ENCODE measurements at regions of chr3 and their contacts with region 1.

Region 1: GRCh38 chr3:31531992-31532586 is 636 bp upstream of the STT3B start:
- DNase-seq: peak; percentile 99
- H3K4me3 Mint-ChIP-seq: no peak overlapping the region
- H3K27ac Mint-ChIP-seq: peak overlapping the region; percentile 98
- H3K4me1 Mint-ChIP-seq: peaks cover 11% of the 10 kb centered on the region
- H3K27me3 Mint-ChIP-seq: no peaks in the 10 kb centered on the region
- CTCF ChIP-seq: no peak

Region 2: DNA sequence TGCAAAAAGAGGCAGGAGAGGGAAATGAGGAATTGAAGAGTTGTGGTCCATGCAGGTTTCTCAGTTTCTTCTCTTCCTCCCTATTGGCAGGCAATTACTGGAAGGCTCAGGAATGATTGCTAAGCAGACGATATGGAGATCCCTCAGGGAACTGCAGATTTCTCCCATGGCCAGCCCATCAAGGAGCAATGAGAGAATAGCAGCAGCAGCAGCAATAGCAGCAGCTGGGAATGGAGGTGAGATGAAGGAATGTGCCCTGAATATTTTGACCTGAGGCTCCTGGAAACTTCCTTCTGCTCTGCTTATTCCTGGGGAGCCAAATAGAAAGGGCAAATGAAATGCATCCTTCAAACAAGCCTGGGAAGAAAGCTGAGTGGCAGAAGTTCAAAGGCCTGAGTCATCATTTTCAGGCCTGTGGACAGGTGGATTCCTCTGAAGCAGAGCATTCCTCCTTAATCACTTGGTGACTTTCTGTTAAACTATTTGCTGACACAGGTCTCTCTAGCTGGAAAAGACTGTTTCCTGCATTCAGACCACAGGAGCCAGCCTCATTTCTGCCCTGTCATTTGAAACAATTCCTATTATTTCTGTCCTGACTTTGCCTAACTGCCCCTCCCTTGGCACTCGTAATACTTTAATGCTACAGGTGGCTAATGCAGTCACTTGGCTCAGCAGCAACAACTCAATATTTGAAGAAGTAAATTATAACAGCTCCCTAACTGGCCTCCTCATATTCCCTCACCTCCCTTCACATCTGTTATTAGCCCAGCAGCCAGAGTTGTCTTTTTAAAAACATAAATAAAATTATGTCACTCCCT is 490.7 kb before region 1 on chr3:
- CTCF ChIA-PET with region 1: no interaction called
- POLR2A ChIA-PET with region 1: interaction called, 13 read pairs
- intact Hi-C with region 1: no loop called
- DNase-seq: peak; percentile 91
- H3K4me3 Mint-ChIP-seq: no peak overlapping the region
- H3K27ac Mint-ChIP-seq: peak overlapping the region; percentile 81
- H3K4me1 Mint-ChIP-seq: peaks cover 47% of the 10 kb centered on the region
- H3K27me3 Mint-ChIP-seq: no peaks in the 10 kb centered on the region
- CTCF ChIP-seq: no peak

Region 3: GRCh38 chr3:31166249-31166885 is 365.7 kb before region 1 on chr3:
- CTCF ChIA-PET with region 1: no interaction called
- POLR2A ChIA-PET with region 1: interaction called, 6 read pairs
- intact Hi-C with region 1: loop called (anchors 5 kb)
- DNase-seq: peak; percentile 73
- H3K4me3 Mint-ChIP-seq: no peak overlapping the region
- H3K27ac Mint-ChIP-seq: peak overlapping the region; percentile 66
- H3K4me1 Mint-ChIP-seq: peaks cover 41% of the 10 kb centered on the region
- H3K27me3 Mint-ChIP-seq: no peaks in the 10 kb centered on the region
- CTCF ChIP-seq: no peak

Region 4: DNA sequence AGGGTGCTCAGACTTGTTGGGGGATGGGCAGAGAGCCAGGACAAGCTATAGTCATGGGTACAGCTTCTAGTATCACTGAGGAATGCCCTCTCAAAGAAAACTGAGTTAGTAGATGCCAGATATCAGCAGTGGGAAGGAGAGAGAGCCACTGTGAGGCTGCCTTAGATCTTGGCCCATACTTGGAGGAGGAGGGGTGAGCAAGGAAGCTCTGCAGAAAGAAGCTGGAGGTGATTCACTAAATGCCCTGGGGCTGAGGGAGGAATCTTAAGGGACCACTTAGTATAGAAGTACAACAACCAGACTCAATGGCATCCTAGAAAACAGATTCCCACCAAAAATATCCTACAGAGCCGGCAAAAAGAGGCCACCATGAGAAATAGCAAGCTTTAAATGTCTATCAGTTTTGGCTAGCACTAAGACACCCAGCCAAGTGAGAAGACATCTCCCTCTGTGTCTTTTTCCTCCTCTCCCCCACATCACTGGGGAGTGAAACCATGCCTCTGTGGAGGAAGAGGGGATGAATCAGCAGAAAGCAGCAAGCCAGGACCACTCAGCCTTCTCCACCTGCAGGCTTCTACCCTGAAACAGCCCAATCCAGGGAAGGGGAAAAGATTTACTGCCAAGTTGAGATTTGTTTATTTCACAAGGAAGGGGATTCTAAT is 281.8 kb before region 1 on chr3:
- CTCF ChIA-PET with region 1: no interaction called
- POLR2A ChIA-PET with region 1: interaction called, 3 read pairs
- intact Hi-C with region 1: loop called (anchors 10 kb)
- DNase-seq: peak; percentile 29
- H3K4me3 Mint-ChIP-seq: no peak overlapping the region
- H3K27ac Mint-ChIP-seq: no peak overlapping the region
- H3K4me1 Mint-ChIP-seq: peaks cover 11% of the 10 kb centered on the region
- H3K27me3 Mint-ChIP-seq: no peaks in the 10 kb centered on the region
- CTCF ChIP-seq: no peak

Region 5: DNA sequence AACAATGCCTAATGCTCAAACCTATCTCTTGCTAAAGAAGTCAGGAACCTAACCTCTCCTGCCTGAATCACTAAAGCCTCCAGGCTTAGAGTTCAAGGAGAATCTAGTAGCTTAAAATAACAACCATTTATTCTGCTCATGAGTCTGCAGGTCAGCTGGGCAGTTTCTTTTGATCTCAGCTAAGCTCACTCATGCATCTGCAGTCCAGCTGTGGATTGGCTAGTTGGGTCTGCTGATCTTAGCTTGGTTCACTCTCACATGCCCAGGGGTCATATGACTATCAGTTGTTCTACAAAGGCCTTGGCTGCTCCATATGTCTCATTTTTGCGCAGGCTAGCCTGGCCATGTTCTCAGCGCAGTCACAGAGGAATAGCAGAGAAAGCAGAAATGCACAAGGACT is 108.6 kb before region 1 on chr3:
- CTCF ChIA-PET with region 1: no interaction called
- POLR2A ChIA-PET with region 1: interaction called, 10 read pairs
- intact Hi-C with region 1: no loop called
- DNase-seq: peak; percentile 1
- H3K4me3 Mint-ChIP-seq: no peak overlapping the region
- H3K27ac Mint-ChIP-seq: no peak overlapping the region
- H3K4me1 Mint-ChIP-seq: no peaks in the 10 kb centered on the region
- H3K27me3 Mint-ChIP-seq: no peaks in the 10 kb centered on the region
- CTCF ChIP-seq: no peak

Region 6: GRCh38 chr3:31550452-31551251 is 18.6 kb after region 1 on chr3:
- CTCF ChIA-PET with region 1: interaction called, 7 read pairs
- POLR2A ChIA-PET with region 1: interaction called, 107 read pairs
- intact Hi-C with region 1: no loop called
- DNase-seq: peak; percentile 52
- H3K4me3 Mint-ChIP-seq: no peak overlapping the region
- H3K27ac Mint-ChIP-seq: no peak overlapping the region
- H3K4me1 Mint-ChIP-seq: peaks cover 43% of the 10 kb centered on the region
- H3K27me3 Mint-ChIP-seq: no peaks in the 10 kb centered on the region
- CTCF ChIP-seq: peak; percentile 52